Activated T-helper 2 cell treated with anti-CD3 and anti-CD28 coated beads, Interferon-gamma antibody, Interleukin-2, Interleukin-4, amounts not matched to agents 10 μg/mL and 5 μg/mL and 100 μg/mL, durations not matched to agents 14 hours and 24 hours and 36 hours (primary cell): ENCODE measurements at regions of chr18 and their contacts with region 1.

Region 1: GRCh38 chr18:48868468-48869466 is 82.0 kb downstream of the SMAD7 start:
- DNase-seq: peak; percentile 38
- H3K4me3 Mint-ChIP-seq: peak overlapping the region; percentile 20
- H3K27ac Mint-ChIP-seq: peak overlapping the region; percentile 94
- H3K4me1 Mint-ChIP-seq: peaks cover 37% of the 10 kb centered on the region
- H3K27me3 Mint-ChIP-seq: no peaks in the 10 kb centered on the region

Region 2: DNA sequence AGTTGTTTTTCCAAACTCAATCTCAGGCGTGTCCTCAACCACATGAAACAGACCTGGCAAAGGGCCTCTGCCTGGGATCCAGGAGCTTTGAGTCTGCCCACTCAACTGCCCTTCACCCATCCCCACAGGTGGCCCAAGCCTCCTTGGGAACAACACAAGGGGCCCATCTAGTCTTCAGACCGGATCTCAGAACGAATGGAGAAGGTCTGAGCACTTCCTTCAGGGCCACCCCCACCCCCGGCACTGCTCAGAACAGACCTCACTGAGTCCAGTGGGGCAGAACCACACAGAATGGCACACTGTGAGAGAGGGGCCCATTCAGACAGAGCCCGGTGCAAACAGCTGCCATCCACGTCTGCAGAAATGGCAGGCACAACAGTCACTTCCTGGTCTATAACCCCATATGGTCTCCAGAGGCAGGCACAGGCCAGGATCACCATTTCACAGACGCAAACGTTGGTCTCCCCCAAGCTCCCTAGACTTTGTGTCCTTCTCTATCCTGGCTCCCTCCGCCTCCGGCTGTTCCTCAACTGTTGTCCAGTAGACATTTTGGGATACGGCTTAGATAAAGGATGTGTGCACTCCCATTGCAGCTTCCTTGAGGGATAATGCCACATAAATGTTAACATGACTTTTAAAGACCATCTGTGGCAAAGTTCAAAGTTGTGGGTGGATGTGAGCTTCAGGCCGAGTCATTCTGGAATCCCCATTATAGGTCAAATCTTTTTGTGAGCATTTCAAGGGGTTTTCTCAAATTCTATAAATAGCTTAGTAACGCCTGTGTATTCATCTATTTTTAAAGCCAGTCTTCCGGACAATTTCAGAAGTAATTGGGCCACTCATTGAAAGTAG is 67.7 kb before region 1 on chr18:
- intact Hi-C with region 1: loop called (anchors 1 kb)
- DNase-seq: no peak
- H3K4me3 Mint-ChIP-seq: peak overlapping the region; percentile 46
- H3K27ac Mint-ChIP-seq: peak overlapping the region; percentile 94
- H3K4me1 Mint-ChIP-seq: peaks cover 61% of the 10 kb centered on the region
- H3K27me3 Mint-ChIP-seq: no peaks in the 10 kb centered on the region

Region 3: DNA sequence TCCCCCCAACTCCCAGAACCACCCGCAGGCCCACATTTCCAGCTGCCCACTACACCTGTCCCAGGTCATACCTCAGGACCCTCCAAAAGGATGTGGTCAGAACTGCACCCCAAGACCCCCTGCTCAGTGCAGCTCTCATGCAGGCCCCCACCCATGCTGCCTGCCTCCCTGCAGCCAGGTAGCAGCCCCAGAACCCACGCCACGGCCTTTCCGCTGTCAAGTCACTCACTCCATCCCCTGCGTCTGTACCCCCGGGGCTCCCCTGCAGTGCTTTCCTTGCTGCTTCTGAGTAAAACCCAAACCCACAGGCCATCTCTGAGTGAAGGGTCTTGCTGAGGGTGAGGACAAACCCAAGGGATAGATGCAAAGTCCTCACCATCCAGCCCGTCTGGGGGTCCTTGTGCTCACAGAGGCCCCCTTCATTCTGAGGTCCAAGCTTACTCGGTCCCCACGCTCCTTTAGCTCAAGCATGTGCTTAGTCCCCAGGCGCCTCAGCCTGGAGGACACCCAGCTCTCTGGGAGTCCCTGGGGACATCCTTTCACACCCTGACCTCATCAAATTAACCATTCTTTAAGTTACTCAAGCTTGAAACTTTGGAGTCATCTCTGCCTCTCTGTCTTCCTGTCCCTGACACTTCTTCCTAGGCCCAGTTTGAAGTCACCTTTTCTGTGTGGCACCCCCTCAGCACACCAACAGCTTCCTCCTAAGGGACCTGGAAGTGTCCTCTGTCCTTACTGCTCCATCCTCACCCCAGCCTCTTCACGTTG is 48.1 kb before region 1 on chr18:
- intact Hi-C with region 1: loop called (anchors 1 kb)
- DNase-seq: no peak
- H3K4me3 Mint-ChIP-seq: no peak overlapping the region
- H3K27ac Mint-ChIP-seq: peak overlapping the region; percentile 71
- H3K4me1 Mint-ChIP-seq: peaks cover 31% of the 10 kb centered on the region
- H3K27me3 Mint-ChIP-seq: no peaks in the 10 kb centered on the region

Region 4: DNA sequence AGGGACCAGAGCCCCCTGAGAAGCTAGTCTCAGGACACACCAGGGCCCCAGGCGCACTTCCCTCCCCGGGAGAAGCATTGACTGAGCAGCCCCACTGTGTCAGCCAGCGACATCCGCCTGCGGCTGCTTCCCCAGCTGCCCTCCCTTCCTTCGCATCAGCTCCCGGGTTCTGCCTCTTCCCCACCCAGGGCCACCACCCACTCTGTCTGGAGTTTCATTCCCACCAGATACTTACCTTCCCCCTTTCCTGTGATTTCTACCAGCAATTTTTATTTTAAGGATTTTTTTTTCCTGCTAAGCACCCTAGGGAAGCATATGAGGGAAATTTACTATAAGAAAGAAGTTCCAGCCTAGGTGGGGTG is 17.2 kb before region 1 on chr18:
- intact Hi-C with region 1: no loop called
- DNase-seq: no peak
- H3K4me3 Mint-ChIP-seq: no peak overlapping the region
- H3K27ac Mint-ChIP-seq: no peak overlapping the region
- H3K4me1 Mint-ChIP-seq: peaks cover 24% of the 10 kb centered on the region
- H3K27me3 Mint-ChIP-seq: peaks cover 2% of the 10 kb centered on the region

Region 5: DNA sequence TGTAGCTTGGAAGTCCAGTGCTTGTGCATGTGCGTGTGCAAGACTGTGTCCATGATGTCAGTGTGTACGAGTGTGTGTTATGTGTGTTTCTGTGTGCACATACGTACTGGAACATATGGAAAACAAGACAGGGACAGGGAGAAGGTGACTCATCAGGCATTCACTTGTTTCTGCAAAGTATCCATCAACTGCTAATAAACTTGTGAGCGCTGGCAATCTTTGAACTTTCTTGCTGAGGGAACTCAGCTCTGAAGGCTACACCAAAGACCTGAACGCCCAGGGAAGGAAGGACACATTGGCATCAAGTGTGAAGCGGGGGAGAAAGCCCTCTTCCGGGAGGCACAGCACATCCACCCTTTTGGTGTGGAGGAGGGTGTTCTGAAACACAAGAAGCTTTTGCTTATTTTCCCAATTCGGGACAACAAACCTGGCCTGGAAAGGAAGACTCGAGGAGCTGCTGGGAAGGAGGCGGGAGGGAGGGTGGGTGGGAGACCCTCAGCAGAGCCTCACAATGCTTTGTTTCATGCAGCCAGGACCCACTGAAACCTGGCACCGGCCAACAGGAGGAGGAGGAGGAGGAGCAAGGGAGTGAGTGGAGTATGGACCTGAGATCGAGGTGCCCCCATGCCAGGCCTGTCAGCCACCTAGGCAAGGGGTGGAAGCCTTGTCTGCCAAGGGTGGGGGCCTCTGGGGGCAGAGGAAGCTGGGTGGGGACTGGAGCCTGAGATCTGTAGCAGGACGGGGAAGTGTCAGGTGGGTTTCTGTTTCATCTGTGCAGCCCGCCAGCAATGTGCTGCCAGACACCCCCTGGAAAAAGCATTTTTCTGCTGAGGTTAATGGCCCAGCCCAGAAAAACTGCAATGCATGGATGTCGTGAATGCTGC is 55.2 kb after region 1 on chr18:
- intact Hi-C with region 1: loop called (anchors 2 kb)
- DNase-seq: no peak
- H3K4me3 Mint-ChIP-seq: peak overlapping the region; percentile 44
- H3K27ac Mint-ChIP-seq: peak overlapping the region; percentile 93
- H3K4me1 Mint-ChIP-seq: peaks cover 61% of the 10 kb centered on the region
- H3K27me3 Mint-ChIP-seq: no peaks in the 10 kb centered on the region

Region 6: GRCh38 chr18:49071317-49071716 is 202.6 kb after region 1 on chr18:
- intact Hi-C with region 1: loop called (anchors 2 kb)
- DNase-seq: no peak
- H3K4me3 Mint-ChIP-seq: no peak overlapping the region
- H3K27ac Mint-ChIP-seq: peak overlapping the region; percentile 28
- H3K4me1 Mint-ChIP-seq: peaks cover 34% of the 10 kb centered on the region
- H3K27me3 Mint-ChIP-seq: no peaks in the 10 kb centered on the region

Region 7: GRCh38 chr18:49178736-49179135 is 310.0 kb after region 1 on chr18:
- intact Hi-C with region 1: loop called (anchors 2 kb)
- DNase-seq: no peak
- H3K4me3 Mint-ChIP-seq: no peak overlapping the region
- H3K27ac Mint-ChIP-seq: no peak overlapping the region
- H3K4me1 Mint-ChIP-seq: peaks cover 26% of the 10 kb centered on the region
- H3K27me3 Mint-ChIP-seq: peaks cover 12% of the 10 kb centered on the region